B cell (primary cell): ENCODE measurements at regions of chr11 and their contacts with region 1.

Region 1: GRCh38 chr11:85983762-85984161 is 85.1 kb downstream of the PICALM start:
- DNase-seq: no peak
- ATAC-seq: no peak
- H3K4me3 ChIP-seq: no peak overlapping the region
- H3K4me3 Mint-ChIP-seq: no peak overlapping the region
- H3K27ac ChIP-seq: no peak overlapping the region
- H3K27ac Mint-ChIP-seq: no peak overlapping the region
- H3K4me1 ChIP-seq: no peaks in the 10 kb centered on the region
- H3K4me1 Mint-ChIP-seq: no peaks in the 10 kb centered on the region
- H3K27me3 ChIP-seq: no peaks in the 10 kb centered on the region
- H3K27me3 Mint-ChIP-seq: no peaks in the 10 kb centered on the region
- CTCF ChIP-seq: no peak

Region 2: DNA sequence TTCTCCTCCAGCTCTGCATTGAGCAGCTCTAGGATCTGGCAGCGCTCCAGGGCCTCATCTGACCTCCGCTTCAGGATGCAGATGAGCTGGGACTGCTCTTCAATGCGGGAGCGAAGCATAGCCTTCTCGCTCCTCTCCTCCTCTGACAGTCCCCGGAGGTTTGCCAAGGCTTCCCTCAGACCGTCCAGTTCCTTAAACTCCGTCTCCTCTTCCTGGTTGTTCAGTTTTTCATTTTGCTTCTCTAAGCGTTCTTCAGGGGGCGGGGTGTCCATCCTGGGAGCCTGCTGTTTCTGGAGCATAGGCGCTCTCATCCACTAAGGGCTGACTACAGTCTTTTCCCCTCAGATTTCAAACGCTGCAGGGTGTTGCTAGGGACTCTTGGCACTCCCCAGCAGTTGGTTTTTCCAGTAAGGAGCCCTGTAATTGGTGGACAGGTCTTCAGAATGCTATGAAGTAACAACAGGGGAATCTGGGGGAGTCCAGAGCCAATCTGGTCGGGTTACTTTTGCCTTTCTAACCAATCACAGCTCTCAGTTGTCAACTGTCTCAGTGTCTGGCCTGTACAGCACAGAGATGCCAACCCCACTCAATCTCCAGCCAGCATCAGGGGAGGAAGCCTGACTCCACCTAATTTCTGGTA is 297.8 kb before region 1 on chr11 and contains the start of gene CCDC89:
- CTCF ChIA-PET with region 1: no interaction called
- POLR2A ChIA-PET with region 1: no interaction called
- intact Hi-C with region 1: no loop called
- DNase-seq: no peak
- ATAC-seq: no peak
- H3K4me3 ChIP-seq: no peak within 1 kb of the TSS
- H3K4me3 Mint-ChIP-seq: no peak within 1 kb of the TSS
- H3K27ac ChIP-seq: no peak within 1 kb of the TSS
- H3K27ac Mint-ChIP-seq: no peak within 1 kb of the TSS
- H3K4me1 ChIP-seq: peaks cover 0 to 4% of the 10 kb centered on the region in 2 donors
- H3K4me1 Mint-ChIP-seq: peaks cover 17% of the 10 kb centered on the region
- H3K27me3 ChIP-seq: peaks cover 0 to 4% (median 0%) of the 10 kb centered on the region in 4 experiments
- H3K27me3 Mint-ChIP-seq: peaks cover 3% of the 10 kb centered on the region
- CTCF ChIP-seq: no peak
- total RNA-seq, gene CCDC89: not detected in 2 replicates

Region 3: DNA sequence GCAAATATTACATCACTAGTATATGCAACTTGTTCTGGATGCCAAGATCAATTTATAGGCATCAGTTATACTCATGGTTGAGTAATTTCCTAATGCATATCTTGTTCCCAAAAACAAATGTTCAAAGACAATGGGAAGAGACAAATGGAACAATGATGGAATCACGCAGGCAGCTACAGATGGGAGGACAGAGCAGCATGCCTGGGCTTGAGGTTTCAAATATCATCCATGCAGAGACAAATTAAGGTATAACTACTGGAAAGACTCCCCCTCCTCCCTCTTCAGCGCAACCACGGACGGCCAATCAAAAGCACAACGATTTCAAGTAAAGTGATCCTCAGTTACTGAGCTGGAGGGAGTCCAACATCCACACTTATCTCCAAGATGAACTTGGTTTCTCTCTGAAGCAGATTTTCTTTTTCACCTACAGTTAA is 21.8 kb before region 1 on chr11:
- CTCF ChIA-PET with region 1: no interaction called
- POLR2A ChIA-PET with region 1: no interaction called
- intact Hi-C with region 1: no loop called
- DNase-seq: no peak
- ATAC-seq: no peak
- H3K4me3 ChIP-seq: no peak overlapping the region
- H3K4me3 Mint-ChIP-seq: no peak overlapping the region
- H3K27ac ChIP-seq: no peak overlapping the region
- H3K27ac Mint-ChIP-seq: no peak overlapping the region
- H3K4me1 ChIP-seq: no peaks in the 10 kb centered on the region
- H3K4me1 Mint-ChIP-seq: no peaks in the 10 kb centered on the region
- H3K27me3 ChIP-seq: no peaks in the 10 kb centered on the region
- H3K27me3 Mint-ChIP-seq: no peaks in the 10 kb centered on the region
- CTCF ChIP-seq: no peak

Region 4: DNA sequence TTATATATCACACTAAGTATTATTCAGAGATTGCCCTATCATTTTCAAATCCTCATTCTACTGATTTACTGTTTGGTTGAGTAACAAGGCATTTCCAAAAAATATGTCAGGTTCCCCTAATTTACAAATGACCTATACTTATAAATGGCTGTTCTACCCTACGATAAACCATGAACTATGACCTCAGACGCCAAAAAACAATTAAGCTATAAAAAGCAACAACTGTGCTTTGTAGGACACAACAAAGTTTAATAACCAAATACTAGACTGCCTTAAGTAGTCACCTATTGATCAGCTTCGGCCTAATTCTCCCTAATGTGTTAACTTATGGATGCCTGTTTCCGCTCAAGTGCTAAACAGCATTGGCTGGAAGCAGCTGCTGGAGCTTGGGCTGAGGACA is 31.9 kb after region 1 on chr11:
- CTCF ChIA-PET with region 1: interaction called, 3 read pairs
- POLR2A ChIA-PET with region 1: no interaction called
- intact Hi-C with region 1: loop called (anchors 5 kb)
- DNase-seq: no peak
- ATAC-seq: no peak
- H3K4me3 ChIP-seq: no peak overlapping the region
- H3K4me3 Mint-ChIP-seq: no peak overlapping the region
- H3K27ac ChIP-seq: no peak overlapping the region
- H3K27ac Mint-ChIP-seq: peak overlapping the region; percentile 39
- H3K4me1 ChIP-seq: no peaks in the 10 kb centered on the region
- H3K4me1 Mint-ChIP-seq: peaks cover 8% of the 10 kb centered on the region
- H3K27me3 ChIP-seq: no peaks in the 10 kb centered on the region
- H3K27me3 Mint-ChIP-seq: no peaks in the 10 kb centered on the region
- CTCF ChIP-seq: no peak